Heart right ventricle (tissue), 16 donors: ENCODE measurements at regions of chr11 and their contacts with region 1.

Region 1: DNA sequence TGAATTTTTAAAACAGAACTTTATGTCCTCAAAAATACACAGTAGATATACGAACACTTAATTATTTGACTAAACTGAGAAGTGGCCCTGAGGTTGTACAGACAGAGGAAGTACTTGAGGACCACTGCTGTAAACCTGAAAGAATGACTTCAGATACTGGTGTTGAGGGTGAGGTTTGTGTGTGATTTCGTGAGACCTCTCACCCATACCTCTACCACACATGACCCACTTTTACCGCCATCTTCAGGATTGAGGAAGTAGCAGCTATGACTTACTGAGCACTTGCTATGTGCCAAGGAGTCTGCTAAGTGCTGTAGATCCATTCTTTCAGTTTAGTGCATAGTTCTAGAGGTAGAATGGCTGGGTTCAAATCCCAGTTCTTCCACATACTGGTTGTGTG is 21.9 kb downstream of the MMP13 start:
- DNase-seq: no peak
- ATAC-seq: no peak
- H3K4me3 ChIP-seq: no peak overlapping the region
- H3K27ac ChIP-seq: no peak overlapping the region
- H3K4me1 ChIP-seq: no peaks in the 10 kb centered on the region
- H3K27me3 ChIP-seq: peaks cover 0 to 34% (median 12%) of the 10 kb centered on the region in 7 donors
- CTCF ChIP-seq: no peak

Region 2: DNA sequence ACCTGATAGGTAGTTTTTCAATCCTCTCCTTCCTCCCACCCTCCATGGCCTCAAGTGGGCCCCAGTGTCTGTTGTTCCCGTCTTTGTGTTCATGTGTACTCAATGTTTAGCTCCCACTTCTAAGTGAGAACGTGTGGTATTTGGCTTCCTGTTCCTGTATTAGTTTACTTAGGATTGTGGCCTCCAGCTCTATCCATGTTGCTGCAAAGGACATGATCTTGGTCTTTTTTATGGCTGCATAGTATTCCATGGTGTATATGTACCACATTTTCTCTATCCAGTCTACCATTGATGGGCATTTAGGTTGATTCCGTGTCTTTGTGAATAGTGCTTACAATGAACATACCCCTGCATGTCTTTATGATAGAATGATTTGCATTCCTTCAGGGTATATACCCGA is 940.5 kb before region 1 on chr11:
- intact Hi-C with region 1: loop called in 1 of 10 experiments (anchors 5 kb)
- DNase-seq: no peak
- ATAC-seq: no peak
- H3K4me3 ChIP-seq: no peak overlapping the region
- H3K27ac ChIP-seq: no peak overlapping the region
- H3K4me1 ChIP-seq: no peaks in the 10 kb centered on the region
- H3K27me3 ChIP-seq: no peaks in the 10 kb centered on the region
- CTCF ChIP-seq: no peak

Region 3: DNA sequence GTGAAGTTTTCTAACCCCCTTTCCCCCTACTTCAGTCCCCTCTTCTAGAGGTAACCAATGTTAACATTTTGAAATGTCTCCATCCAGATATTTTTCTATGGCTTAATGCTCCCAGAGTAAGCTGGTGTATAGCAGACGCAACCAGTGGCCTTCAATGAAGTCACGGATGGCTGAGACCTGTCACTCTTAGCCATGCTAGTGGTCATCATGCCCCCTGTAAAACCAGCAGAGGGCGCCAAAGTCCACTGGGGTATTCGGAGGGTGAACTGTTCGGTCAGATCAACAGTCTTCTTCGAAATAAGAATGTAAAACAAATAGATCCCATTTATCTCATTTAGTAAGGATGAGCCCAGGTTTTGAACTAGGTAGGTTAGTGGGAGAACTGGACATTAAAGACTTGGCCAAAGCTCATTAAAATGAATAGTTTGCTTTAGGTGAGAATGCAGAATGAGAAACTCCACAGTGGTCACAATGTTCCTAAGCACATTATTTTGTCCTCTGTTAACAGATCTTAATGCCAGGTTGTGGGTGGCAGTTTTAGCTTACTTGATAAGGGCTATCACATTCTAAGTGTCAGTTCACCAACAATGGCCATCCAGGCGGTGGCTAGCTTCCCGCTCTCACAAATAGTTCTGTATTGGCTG is 200.3 kb before region 1 on chr11:
- intact Hi-C with region 1: loop called in 3 of 10 experiments (anchors 5 to 10 kb)
- DNase-seq: peak in 1 of 2 donors; percentile 31
- ATAC-seq: peak in 2 of 8 donors; percentile 29 to 38
- H3K4me3 ChIP-seq: no peak overlapping the region
- H3K27ac ChIP-seq: no peak overlapping the region
- H3K4me1 ChIP-seq: peaks cover 0 to 3% (median 0%) of the 10 kb centered on the region in 9 donors
- H3K27me3 ChIP-seq: peaks cover 0 to 46% (median 0%) of the 10 kb centered on the region in 7 donors
- CTCF ChIP-seq: peak; percentile 35 to 77 (median 39)

Region 4: GRCh38 chr11:102831489-102832440 is 101.9 kb before region 1 on chr11:
- intact Hi-C with region 1: loop called in 1 of 10 experiments (anchors 10 kb)
- DNase-seq: peak in 1 of 2 donors; percentile 23
- ATAC-seq: no peak
- H3K4me3 ChIP-seq: peak overlapping the region in 2 of 10 donors; percentile 7 to 21
- H3K27ac ChIP-seq: no peak overlapping the region
- H3K4me1 ChIP-seq: no peaks in the 10 kb centered on the region
- H3K27me3 ChIP-seq: peaks cover 0 to 34% (median 13%) of the 10 kb centered on the region in 7 donors
- CTCF ChIP-seq: peak in 5 of 9 donors; percentile 7 to 23 (median 17)

Region 5: GRCh38 chr11:102879801-102880200 is 53.8 kb before region 1 on chr11:
- intact Hi-C with region 1: loop called in 1 of 10 experiments (anchors 10 kb)
- DNase-seq: no peak
- ATAC-seq: no peak
- H3K4me3 ChIP-seq: no peak overlapping the region
- H3K27ac ChIP-seq: no peak overlapping the region
- H3K4me1 ChIP-seq: peaks cover 0 to 6% (median 0%) of the 10 kb centered on the region in 9 donors
- H3K27me3 ChIP-seq: no peaks in the 10 kb centered on the region
- CTCF ChIP-seq: no peak

Region 6: DNA sequence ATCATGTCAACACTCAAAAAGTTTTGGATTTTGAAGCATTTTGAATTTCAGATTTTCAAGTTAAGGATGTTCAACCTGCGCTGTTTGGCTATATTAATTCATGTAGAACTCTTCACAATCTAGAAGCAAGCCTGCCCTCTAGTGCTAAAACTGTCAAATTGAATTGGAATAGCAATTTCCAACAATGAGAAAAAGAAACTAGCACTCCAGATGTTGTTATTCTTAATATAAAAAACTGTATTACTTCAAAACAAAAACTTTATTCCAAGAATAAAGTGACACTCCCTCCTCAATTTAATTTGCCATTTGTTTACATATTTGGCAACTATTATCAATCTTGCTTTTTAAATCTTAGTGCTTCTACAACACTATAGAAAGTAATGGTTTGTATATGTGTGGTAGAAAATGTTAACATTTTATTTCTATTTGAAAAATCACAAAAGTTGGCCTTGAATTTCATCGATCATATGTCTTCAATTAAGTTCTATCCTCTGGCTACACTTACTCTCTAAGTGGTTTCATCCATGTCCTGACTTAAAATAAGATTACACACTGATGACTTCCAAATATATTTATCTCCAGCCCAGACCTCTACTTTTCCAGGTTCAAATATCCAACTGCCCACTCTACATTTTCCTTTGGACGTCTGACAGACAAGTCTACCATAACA is 121.7 kb after region 1 on chr11:
- intact Hi-C with region 1: no loop called
- DNase-seq: no peak
- ATAC-seq: peak in 1 of 8 donors; percentile 57
- H3K4me3 ChIP-seq: no peak overlapping the region
- H3K27ac ChIP-seq: no peak overlapping the region
- H3K4me1 ChIP-seq: peaks cover 0 to 3% (median 0%) of the 10 kb centered on the region in 9 donors
- H3K27me3 ChIP-seq: no peaks in the 10 kb centered on the region
- CTCF ChIP-seq: peak in 8 of 9 donors; percentile 9 to 76 (median 62)